Heart left ventricle (tissue), 16 donors: ENCODE measurements at regions of chr10 and their contacts with region 1.

Region 1: GRCh38 chr10:13074561-13075451 is 25.2 kb upstream of the OPTN start:
- DNase-seq: peak; percentile 55 to 72 (median 60)
- ATAC-seq: peak in 3 of 4 donors; percentile 72 to 82 (median 80)
- H3K4me3 ChIP-seq: no peak overlapping the region
- H3K27ac ChIP-seq: no peak overlapping the region
- H3K4me1 ChIP-seq: no peaks in the 10 kb centered on the region
- H3K27me3 ChIP-seq: peaks cover 0 to 15% (median 3%) of the 10 kb centered on the region in 9 donors
- CTCF ChIP-seq: peak; percentile 66 to 90 (median 80)
- POLR2A ChIP-seq: no peak

Region 2: GRCh38 chr10:12720217-12720981 is 354.4 kb before region 1 on chr10:
- intact Hi-C with region 1: loop called in 6 of 10 experiments (anchors 5 to 10 kb)
- DNase-seq: peak; percentile 41 to 80 (median 71)
- ATAC-seq: peak in 3 of 4 donors; percentile 81 to 89 (median 85)
- H3K4me3 ChIP-seq: no peak overlapping the region
- H3K27ac ChIP-seq: peak overlapping the region in 3 of 12 donors; percentile 4 to 54 (median 25)
- H3K4me1 ChIP-seq: peaks cover 0 to 28% (median 12%) of the 10 kb centered on the region in 12 donors
- H3K27me3 ChIP-seq: no peaks in the 10 kb centered on the region
- CTCF ChIP-seq: no peak
- POLR2A ChIP-seq: no peak

Region 3: GRCh38 chr10:12729885-12730284 is 344.9 kb before region 1 on chr10:
- intact Hi-C with region 1: loop called in 1 of 10 experiments (anchors 5 kb)
- DNase-seq: no peak
- ATAC-seq: no peak
- H3K4me3 ChIP-seq: no peak overlapping the region
- H3K27ac ChIP-seq: no peak overlapping the region
- H3K4me1 ChIP-seq: peaks cover 0 to 13% (median 0%) of the 10 kb centered on the region in 12 donors
- H3K27me3 ChIP-seq: no peaks in the 10 kb centered on the region
- CTCF ChIP-seq: peak in 4 of 12 donors; percentile 9 to 37 (median 18)
- POLR2A ChIP-seq: no peak

Region 4: GRCh38 chr10:12782537-12782936 is 292.3 kb before region 1 on chr10:
- intact Hi-C with region 1: loop called in 1 of 10 experiments (anchors 5 kb)
- DNase-seq: peak in 1 of 5 donors; percentile 37
- ATAC-seq: no peak
- H3K4me3 ChIP-seq: no peak overlapping the region
- H3K27ac ChIP-seq: no peak overlapping the region
- H3K4me1 ChIP-seq: peaks cover 0 to 5% (median 0%) of the 10 kb centered on the region in 12 donors
- H3K27me3 ChIP-seq: peaks cover 0 to 8% (median 0%) of the 10 kb centered on the region in 9 donors
- CTCF ChIP-seq: peak; percentile 49 to 73 (median 67)
- POLR2A ChIP-seq: no peak